ENCODE measurements at regions of chr1 and their contacts with region 1.

Region 1: GRCh38 chr1:75203415-75204277 is 69.5 kb downstream of the LHX8 start:
- DNase-seq: no peak
- H3K4me3 ChIP-seq: no peak overlapping the region
- H3K27ac ChIP-seq: no peak overlapping the region
- H3K4me1 ChIP-seq: peaks cover 0 to 3% (median 0%) of the 10 kb centered on the region in 4 experiments; a peak in 1 of 7 replicates
- H3K27me3 ChIP-seq: no peaks in the 10 kb centered on the region
- CTCF ChIP-seq: peak in 2 of 3 experiments; percentile 79 to 91; a peak in 3 of 4 replicates
- EP300 ChIP-seq: no peak
- POLR2A ChIP-seq: no peak
- RAD21 ChIP-seq: peak; percentile 92 to 94

Region 2: DNA sequence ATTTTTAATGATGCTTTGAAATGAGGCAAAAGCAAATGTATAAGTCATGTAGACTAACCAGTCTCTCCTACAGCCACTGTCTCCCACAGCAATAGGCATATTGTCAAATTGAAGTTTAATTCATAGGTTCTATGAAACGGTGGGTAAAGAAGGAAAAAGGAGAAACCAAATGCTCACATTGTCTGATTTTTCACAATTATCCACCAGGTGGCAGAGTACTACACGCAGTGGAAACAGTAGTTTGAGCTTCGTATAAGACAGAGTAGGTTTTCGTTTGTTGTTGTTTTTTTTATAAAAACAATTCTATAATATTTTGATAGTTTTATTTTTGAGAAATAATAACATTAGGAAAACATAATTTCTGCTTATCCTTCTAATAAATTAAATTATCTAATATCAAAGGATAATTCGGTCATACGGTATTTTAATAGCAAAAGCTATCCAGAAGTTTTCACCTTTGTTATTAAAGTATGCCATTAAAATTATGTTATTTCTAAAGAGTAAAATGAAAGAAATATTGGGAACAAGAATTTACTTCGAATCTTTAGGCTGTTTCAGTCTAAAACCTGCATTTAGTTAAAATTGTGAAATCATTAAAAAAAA is 431.6 kb before region 1 on chr1:
- CTCF ChIA-PET with region 1: interaction called, 42 read pairs
- POLR2A ChIA-PET with region 1: no interaction called
- DNase-seq: no peak
- H3K4me3 ChIP-seq: no peak overlapping the region
- H3K27ac ChIP-seq: no peak overlapping the region
- H3K4me1 ChIP-seq: no peaks in the 10 kb centered on the region
- H3K27me3 ChIP-seq: no peaks in the 10 kb centered on the region
- CTCF ChIP-seq: peak in 2 of 3 experiments; percentile 63 to 69; a peak in 3 of 4 replicates
- EP300 ChIP-seq: no peak
- POLR2A ChIP-seq: no peak
- RAD21 ChIP-seq: peak; percentile 89 to 91

Region 3: DNA sequence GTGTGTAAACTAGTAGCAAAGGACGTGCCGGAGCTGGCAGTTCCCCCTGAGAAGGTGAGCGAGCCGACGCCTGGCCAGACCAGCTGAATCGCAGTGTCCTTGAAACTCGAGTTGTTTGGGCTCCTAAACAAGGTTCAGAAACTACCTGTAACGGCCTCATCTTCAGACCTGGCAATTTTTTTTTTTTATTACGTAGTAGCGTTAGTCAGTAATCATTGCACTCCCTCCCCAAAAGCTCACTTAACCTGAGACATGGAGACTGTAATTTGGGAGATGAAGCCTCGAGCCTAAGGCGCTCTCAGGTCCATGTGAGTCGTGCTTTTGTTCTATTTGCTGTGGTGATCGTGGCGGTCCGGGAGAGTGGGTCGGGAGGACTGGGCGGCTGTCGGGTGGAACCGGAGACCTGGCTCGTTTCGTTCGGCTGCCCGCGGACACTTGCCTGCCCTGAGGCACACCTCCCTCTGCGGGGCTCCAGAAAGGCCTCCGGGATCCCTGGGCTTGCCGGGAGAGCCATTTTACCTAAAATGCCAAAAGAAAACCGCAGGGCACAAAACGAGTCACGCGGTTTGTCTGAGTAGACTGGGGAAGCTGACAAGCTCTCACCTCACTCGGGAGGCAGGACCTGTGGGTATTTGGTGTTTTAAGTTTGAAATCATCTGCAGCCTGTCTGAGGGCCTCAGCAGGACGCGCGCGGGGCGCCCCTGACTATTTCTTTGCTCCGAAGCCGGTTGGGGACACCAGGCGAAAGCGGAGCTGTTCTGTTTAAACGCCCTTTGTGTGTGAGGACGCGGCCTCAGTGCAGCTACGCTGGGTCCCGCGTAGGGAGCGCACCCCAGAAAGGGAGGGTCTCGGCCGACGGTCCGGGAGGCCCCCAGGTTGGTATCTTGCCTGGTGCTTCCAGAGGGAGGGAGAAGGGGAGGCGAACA is 68.7 kb before region 1 on chr1:
- CTCF ChIA-PET with region 1: interaction called, 39 read pairs
- POLR2A ChIA-PET with region 1: no interaction called
- DNase-seq: peak in 1 of 2 experiments; percentile 79
- H3K4me3 ChIP-seq: peak overlapping the region; percentile 49 to 70 (median 57)
- H3K27ac ChIP-seq: no peak overlapping the region
- H3K4me1 ChIP-seq: peaks cover 10 to 46% (median 22%) of the 10 kb centered on the region in 4 experiments
- H3K27me3 ChIP-seq: peaks cover 43 to 94% (median 72%) of the 10 kb centered on the region in 4 experiments
- CTCF ChIP-seq: no peak
- EP300 ChIP-seq: no peak
- POLR2A ChIP-seq: no peak
- RAD21 ChIP-seq: no peak

Region 4: GRCh38 chr1:75188892-75189291 is 14.8 kb before region 1 on chr1:
- CTCF ChIA-PET with region 1: interaction called, 12 read pairs
- POLR2A ChIA-PET with region 1: no interaction called
- DNase-seq: no peak
- H3K4me3 ChIP-seq: no peak overlapping the region
- H3K27ac ChIP-seq: no peak overlapping the region
- H3K4me1 ChIP-seq: no peaks in the 10 kb centered on the region
- H3K27me3 ChIP-seq: no peaks in the 10 kb centered on the region
- CTCF ChIP-seq: no peak
- EP300 ChIP-seq: no peak
- POLR2A ChIP-seq: no peak
- RAD21 ChIP-seq: no peak

Region 5: GRCh38 chr1:75338616-75339483 is 135.2 kb after region 1 on chr1:
- CTCF ChIA-PET with region 1: no interaction called
- POLR2A ChIA-PET with region 1: no interaction called
- DNase-seq: no peak
- H3K4me3 ChIP-seq: no peak overlapping the region
- H3K27ac ChIP-seq: no peak overlapping the region
- H3K4me1 ChIP-seq: peaks cover 0 to 4% (median 4%) of the 10 kb centered on the region in 4 experiments; a peak in 3 of 7 replicates
- H3K27me3 ChIP-seq: no peaks in the 10 kb centered on the region
- CTCF ChIP-seq: no peak
- EP300 ChIP-seq: no peak
- POLR2A ChIP-seq: no peak
- RAD21 ChIP-seq: no peak

Region 6: DNA sequence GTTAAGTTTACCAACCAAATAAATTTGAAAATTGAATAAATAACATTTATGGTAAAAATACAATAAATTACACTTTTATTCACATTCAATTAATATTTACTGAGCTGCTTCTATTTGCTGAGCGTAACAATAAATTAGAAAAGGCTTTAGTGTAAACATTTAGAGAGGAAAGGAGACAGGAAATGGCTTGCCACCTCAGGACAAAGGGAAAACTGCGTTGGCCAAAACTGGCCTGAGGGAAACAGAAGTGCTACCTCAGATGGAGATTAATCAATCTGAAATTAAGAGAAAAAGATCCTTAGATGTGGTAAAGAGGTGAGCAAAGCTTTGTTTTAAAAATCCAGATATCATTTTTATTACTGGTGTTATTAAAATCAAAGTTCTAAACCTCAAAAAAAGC is 279.3 kb after region 1 on chr1:
- CTCF ChIA-PET with region 1: no interaction called
- POLR2A ChIA-PET with region 1: no interaction called
- DNase-seq: no peak
- H3K4me3 ChIP-seq: no peak overlapping the region
- H3K27ac ChIP-seq: no peak overlapping the region
- H3K4me1 ChIP-seq: no peaks in the 10 kb centered on the region
- H3K27me3 ChIP-seq: no peaks in the 10 kb centered on the region
- CTCF ChIP-seq: no peak
- EP300 ChIP-seq: no peak
- POLR2A ChIP-seq: no peak
- RAD21 ChIP-seq: no peak